GM12878 (cell line): ENCODE measurements at regions of chr17 and their contacts with region 1.

Region 1: DNA sequence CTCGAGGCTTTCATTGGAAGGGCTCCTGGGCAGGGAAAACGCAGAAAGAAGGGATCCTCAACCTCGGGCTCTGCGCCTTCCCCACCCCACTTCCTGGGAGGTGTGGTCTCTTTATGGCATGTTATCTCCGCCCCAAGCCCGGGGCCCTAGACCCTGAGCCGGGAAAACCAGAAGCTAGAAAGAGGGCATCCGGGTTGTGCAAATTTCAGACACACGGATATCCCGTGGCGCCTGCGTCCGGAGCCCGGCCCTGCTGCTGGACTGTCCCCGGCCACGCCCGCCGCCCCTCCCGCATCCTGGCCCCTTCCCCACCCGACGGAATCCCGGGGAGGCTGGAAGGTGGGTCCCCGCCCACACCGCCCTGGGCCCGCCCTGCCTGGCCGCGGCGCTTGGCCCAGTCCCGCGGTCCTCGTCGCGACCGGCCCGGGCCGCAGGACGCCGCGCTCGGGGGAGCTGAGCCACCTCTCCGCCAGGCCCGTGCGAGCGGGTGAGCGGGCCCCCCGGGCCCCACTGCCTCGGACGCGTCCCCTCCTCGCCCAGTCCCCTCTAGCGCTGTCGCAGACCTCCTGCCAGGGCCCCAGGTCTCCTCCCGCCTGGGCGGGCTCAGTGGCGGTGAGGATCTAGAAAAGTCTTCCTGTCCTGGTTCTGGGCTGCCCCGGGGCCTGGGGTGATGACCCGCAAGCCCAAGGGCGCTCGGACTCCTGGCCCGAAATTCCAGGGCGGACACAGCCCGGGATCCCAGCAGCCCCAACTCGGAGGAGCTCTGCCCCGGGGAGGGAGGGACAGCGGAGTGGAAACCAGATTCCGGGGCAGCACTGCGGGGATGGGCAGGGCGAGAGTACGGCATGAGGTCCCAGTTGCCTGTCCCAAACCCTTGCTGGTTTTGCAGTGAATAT is at the start of gene SLC16A5:
- DNase-seq: no peak
- ATAC-seq: peak; percentile 84
- H3K4me3 ChIP-seq: peak within 1 kb of the TSS; percentile 69
- H3K27ac ChIP-seq: peak within 1 kb of the TSS; percentile 50
- H3K4me1 ChIP-seq: peaks cover 13% of the 10 kb centered on the region
- H3K27me3 ChIP-seq: no peaks in the 10 kb centered on the region
- CTCF ChIP-seq: no peak
- EP300 ChIP-seq: no peak
- POLR2A ChIP-seq: peak; percentile 71; the same call in 1 of the 2 replicates
- RAD21 ChIP-seq: no peak
- polyA plus RNA-seq, gene SLC16A5: 0.03 to 0.16 TPM

Region 2: DNA sequence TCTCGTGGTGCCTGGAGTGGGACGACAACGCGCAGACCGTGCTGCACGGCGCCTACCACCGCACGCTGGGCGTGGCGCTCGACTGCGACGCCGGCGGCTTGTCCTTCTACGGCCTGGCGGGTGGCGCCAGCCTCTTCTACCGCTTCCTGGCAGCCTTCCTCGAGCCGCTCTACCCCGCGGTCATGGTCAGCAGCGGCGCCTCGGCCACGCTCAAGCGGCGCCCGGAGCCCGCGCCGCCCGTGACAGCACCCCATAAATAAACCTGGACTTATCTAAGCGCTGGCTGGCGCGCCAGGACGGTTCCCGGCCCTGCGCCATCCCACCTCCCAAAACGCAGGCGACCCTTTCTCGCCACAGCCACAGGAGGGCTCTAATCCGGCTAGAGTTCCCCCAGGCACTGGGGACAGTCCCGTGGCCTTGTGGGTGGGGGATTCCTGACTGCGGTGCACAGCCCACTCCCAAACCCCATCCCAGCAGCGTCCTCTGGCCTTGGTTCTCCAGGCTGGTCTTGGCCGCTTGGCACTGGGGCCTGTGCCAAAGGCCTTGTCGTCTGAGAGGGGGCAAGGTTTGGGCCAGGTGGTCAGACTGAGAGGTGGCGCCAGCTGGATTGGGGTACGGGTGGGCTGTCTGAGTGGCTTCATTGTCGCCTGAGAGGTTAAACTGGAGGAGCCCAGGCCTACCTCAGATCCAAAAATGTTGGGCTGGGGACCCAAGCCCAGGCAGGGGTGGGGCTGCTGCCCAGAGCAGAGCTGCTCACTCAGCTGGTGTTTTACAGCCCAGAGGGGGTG is 10.1 kb before region 1 on chr17:
- CTCF ChIA-PET with region 1: interaction called, 3 read pairs
- POLR2A ChIA-PET with region 1: interaction called, 15 read pairs
- RAD21 ChIA-PET with region 1: interaction called, 9 read pairs
- SMC1A ChIA-PET with region 1: interaction called, 9 read pairs
- in situ Hi-C with region 1: no loop called
- intact Hi-C with region 1: no loop called
- DNase-seq: no peak
- ATAC-seq: peak; percentile 77
- H3K4me3 ChIP-seq: peak overlapping the region; percentile 47; the same call in 1 of the 2 replicates
- H3K27ac ChIP-seq: peak overlapping the region; percentile 64
- H3K4me1 ChIP-seq: peaks cover 30% of the 10 kb centered on the region
- H3K27me3 ChIP-seq: no peaks in the 10 kb centered on the region
- CTCF ChIP-seq: peak; percentile 41 to 44 (median 42); a peak in 5 of 6 replicates
- EP300 ChIP-seq: no peak; a peak in 1 of 4 replicates
- POLR2A ChIP-seq: peak; percentile 82
- RAD21 ChIP-seq: no peak